Right ventricle myocardium inferior (tissue), 1 donor: ENCODE measurements at regions of chr20 and their contacts with region 1.

Region 1: GRCh38 chr20:15528391-15529111 is 1044.7 kb downstream of the KIF16B start:
- DNase-seq: no peak
- ATAC-seq: no peak

Region 2: GRCh38 chr20:16661756-16662155 is 1133.2 kb after region 1 on chr20:
- intact Hi-C with region 1: loop called (anchors 5 kb)
- DNase-seq: no peak
- ATAC-seq: no peak